ENCODE measurements at regions of chr2 and their contacts with region 1.

Region 1: DNA sequence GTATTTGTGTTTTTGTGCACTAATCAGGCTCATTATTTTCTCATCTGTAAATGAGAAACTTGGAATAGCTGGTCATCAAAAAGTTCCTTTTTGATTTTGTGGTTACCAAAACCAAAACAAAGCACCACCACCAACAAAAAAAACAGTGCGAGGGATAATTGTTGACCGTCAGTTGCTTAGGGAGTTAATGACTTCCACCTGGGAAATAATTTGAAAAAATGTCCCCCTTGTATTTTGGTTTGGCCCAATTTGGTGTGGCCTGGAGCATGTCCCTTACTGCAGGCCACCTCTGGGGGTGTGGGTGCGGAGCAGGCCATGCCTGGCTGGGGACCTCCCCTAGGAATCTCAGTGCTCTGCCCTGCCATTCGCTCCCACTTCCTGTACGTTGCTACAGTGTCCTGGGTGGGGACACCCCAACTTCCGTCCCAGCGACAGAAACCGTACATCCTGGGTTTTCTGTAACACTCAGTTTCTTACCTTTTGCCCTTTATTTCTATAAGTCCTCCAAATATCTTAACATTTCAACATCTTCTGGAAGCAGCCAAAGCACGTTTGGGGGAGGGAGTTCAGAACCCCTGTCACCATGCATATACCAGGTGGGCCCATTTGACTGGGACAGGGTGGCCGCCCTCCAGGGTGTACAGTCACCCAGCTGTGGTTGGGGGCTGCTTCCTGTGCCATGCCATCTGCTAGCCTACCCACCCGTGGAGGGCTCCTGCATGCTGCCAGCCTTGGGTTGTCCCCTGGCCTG is 31.3 kb downstream of the NCK2 start:
- DNase-seq: peak in 7 of 10 donors; percentile 26 to 71 (median 52)
- ATAC-seq: peak; percentile 66 to 75
- H3K4me3 Mint-ChIP-seq: peak overlapping the region; percentile 67 to 89 (median 80)
- H3K27ac Mint-ChIP-seq: peak overlapping the region; percentile 88 to 99 (median 97)
- H3K4me1 Mint-ChIP-seq: peaks cover 55 to 97% (median 96%) of the 10 kb centered on the region in 4 donors
- H3K27me3 Mint-ChIP-seq: no peaks in the 10 kb centered on the region

Region 2: GRCh38 chr2:105787376-105788318 is 11.7 kb after region 1 on chr2:
- POLR2A ChIA-PET with region 1: interaction called, 18 read pairs
- DNase-seq: peak in 3 of 10 donors; percentile 38 to 77 (median 49)
- ATAC-seq: peak in 1 of 2 donors; percentile 24
- H3K4me3 Mint-ChIP-seq: peak overlapping the region; percentile 12 to 85 (median 70)
- H3K27ac Mint-ChIP-seq: peak overlapping the region; percentile 88 to 96 (median 93)
- H3K4me1 Mint-ChIP-seq: peaks cover 48 to 100% (median 98%) of the 10 kb centered on the region in 4 donors
- H3K27me3 Mint-ChIP-seq: no peaks in the 10 kb centered on the region

Measured in naive thymus-derived CD8-positive, alpha-beta T cell (primary cell).